ENCODE measurements at regions of chr19 and their contacts with region 1.

Region 1: DNA sequence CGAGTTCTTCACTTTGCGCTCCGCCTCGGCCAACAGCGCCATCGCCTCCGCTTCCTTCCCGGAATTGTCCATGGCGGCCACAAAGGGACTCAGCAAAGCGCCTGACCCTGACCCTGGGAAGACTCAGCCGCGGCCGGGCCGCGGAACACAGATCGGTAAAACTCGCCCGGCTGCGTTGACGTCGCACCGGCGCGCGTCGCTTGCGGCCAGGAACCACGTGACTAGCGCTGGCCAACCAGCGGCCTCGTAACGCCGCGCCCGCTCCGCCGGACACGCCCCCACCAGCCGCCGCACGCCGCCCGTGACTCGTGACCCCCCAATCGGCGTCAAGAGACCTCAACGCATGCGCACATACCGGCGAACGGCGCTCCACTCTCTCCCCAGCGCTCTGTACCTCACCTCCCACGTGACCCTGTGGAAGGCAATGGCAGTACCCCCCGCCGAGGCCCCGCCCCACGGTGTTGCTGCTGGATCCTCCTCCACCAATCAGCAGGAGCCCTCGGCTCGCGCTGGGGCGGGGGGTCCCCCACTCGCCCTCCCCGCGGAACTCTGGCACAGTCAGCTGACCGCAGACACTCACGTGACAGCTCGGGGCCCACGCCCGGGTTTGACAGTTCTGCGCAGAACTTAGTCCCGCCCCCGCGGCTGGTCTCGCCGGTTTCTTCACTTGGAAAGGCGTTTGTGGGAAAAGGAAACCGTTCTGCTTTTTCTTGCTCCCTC is at the start of gene NAPA:
- DNase-seq: peak; percentile 100
- H3K4me3 ChIP-seq: peak within 1 kb of the TSS; percentile 84 to 99 (median 91)
- H3K27ac ChIP-seq: peak within 1 kb of the TSS; percentile 85
- H3K4me1 ChIP-seq: peaks cover 26% of the 10 kb centered on the region
- H3K27me3 ChIP-seq: no peaks in the 10 kb centered on the region
- CTCF ChIP-seq: no peak
- total RNA-seq, gene NAPA: 46.0 to 70.7 TPM

Region 2: DNA sequence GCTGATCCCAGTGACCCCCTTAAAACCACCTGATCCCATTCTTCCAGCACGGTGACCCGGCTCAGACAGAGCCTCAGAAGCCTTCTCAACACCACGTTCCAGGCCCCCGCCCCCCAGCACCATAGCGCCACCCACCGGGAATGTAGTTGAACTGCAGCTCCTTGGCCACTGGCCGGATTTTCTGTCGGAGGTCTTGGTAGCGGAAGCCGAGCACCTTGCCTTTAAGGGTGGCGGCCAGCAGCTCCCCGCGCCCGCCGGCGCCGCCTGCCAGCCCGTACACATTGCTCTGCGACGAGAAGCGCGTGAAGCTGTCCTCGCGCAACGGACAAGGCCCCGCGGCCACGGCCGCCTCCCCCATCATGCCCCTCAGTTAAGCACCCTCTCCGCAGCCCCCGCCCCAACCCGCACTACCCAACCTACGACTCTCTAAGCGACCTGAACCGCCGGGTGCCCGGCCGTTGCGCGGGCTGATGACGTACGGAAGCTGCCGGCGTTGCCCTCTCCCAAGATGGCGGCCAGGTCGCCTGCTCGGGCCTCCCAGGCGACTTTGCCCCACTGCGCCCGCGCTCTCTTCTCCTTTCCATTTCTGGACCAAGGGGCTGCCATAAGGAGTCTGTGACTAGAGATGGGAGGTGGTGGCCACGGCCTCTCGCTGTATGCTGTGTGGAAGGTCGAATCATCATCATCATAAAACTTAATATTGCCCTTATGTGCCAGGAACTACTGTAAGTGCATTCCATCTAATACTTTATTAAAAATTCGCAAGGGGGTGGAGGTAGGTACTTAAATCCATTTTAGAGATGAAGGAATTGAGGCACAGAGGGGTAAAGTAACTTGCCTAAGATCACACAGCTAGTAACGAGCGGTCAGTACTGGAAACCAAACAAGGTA is 31.0 kb before region 1 on chr19 and contains the start of gene KPTN:
- CTCF ChIA-PET with region 1: no interaction called
- dilution Hi-C with region 1: no loop called
- in situ Hi-C with region 1: no loop called
- intact Hi-C with region 1: loop called (anchors 1 kb)
- DNase-seq: peak; percentile 82
- H3K4me3 ChIP-seq: peak within 1 kb of the TSS; percentile 73 to 96 (median 92)
- H3K27ac ChIP-seq: peak within 1 kb of the TSS; percentile 66
- H3K4me1 ChIP-seq: peaks cover 3% of the 10 kb centered on the region
- H3K27me3 ChIP-seq: no peaks in the 10 kb centered on the region
- CTCF ChIP-seq: peak; percentile 95 to 99
- total RNA-seq, gene KPTN: 1.5 to 10.8 TPM

Region 3: GRCh38 chr19:47494729-47495128 is 20.3 kb before region 1 on chr19:
- CTCF ChIA-PET with region 1: no interaction called
- dilution Hi-C with region 1: no loop called
- in situ Hi-C with region 1: no loop called
- intact Hi-C with region 1: no loop called
- DNase-seq: no peak
- H3K4me3 ChIP-seq: no peak overlapping the region
- H3K27ac ChIP-seq: no peak overlapping the region
- H3K4me1 ChIP-seq: no peaks in the 10 kb centered on the region
- H3K27me3 ChIP-seq: no peaks in the 10 kb centered on the region
- CTCF ChIP-seq: no peak

Region 4: DNA sequence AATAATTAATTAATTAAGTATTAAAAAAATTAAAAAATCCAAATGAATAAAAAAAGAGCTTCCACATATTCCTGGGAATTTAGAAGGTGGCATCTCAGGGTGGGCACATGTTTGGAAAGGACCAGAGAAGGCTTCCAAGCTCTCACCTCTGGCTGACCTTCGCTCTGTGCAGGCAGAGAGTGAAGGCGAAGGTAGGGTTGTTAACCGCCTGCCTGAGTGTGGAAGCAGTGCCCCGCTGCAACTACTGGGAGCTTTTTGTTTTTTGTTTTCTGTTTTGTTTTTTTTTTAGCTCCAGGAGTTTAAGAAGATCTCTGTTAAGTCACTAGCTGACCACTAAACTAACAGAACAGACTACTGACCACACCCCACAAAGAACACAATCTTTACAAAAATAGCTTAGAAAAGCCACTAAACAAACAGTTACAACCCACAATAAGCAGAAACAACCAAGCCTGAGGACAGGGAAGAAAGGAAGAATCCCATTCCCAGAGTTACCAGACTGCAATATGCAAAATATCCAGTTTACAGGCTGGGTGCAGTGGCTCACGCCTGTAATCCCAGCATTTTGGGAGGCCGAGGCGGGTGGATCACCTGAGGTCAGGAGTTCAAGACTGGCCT is 46.5 kb after region 1 on chr19:
- CTCF ChIA-PET with region 1: no interaction called
- dilution Hi-C with region 1: no loop called
- in situ Hi-C with region 1: no loop called
- intact Hi-C with region 1: no loop called
- DNase-seq: no peak
- H3K4me3 ChIP-seq: no peak overlapping the region
- H3K27ac ChIP-seq: no peak overlapping the region
- H3K4me1 ChIP-seq: peaks cover 3% of the 10 kb centered on the region
- H3K27me3 ChIP-seq: no peaks in the 10 kb centered on the region
- CTCF ChIP-seq: no peak

Region 5: GRCh38 chr19:47600246-47601179 is 85.5 kb after region 1 on chr19:
- CTCF ChIA-PET with region 1: no interaction called
- dilution Hi-C with region 1: no loop called
- in situ Hi-C with region 1: loop called in 1 of 2 experiments (anchors 5 kb)
- intact Hi-C with region 1: loop called (anchors 1 kb)
- DNase-seq: peak; percentile 99
- H3K4me3 ChIP-seq: peak overlapping the region; percentile 57 to 90 (median 62)
- H3K27ac ChIP-seq: peak overlapping the region; percentile 70
- H3K4me1 ChIP-seq: peaks cover 17% of the 10 kb centered on the region
- H3K27me3 ChIP-seq: no peaks in the 10 kb centered on the region
- CTCF ChIP-seq: peak in 1 of 2 donors; percentile 2